Activated T-helper 1 cell treated with anti-CD3 and anti-CD28 coated beads, Interleukin-12 subunit alpha, Interleukin-12 subunit beta, Interleukin-2, Interleukin-4 antibody, amounts not matched to agents 30 ng/mL and 10 ng/mL and 1 ng/mL, durations not matched to agents 14 hours and 24 hours and 36 hours (primary cell): ENCODE measurements at regions of chr11 and their contacts with region 1.

Region 1: DNA sequence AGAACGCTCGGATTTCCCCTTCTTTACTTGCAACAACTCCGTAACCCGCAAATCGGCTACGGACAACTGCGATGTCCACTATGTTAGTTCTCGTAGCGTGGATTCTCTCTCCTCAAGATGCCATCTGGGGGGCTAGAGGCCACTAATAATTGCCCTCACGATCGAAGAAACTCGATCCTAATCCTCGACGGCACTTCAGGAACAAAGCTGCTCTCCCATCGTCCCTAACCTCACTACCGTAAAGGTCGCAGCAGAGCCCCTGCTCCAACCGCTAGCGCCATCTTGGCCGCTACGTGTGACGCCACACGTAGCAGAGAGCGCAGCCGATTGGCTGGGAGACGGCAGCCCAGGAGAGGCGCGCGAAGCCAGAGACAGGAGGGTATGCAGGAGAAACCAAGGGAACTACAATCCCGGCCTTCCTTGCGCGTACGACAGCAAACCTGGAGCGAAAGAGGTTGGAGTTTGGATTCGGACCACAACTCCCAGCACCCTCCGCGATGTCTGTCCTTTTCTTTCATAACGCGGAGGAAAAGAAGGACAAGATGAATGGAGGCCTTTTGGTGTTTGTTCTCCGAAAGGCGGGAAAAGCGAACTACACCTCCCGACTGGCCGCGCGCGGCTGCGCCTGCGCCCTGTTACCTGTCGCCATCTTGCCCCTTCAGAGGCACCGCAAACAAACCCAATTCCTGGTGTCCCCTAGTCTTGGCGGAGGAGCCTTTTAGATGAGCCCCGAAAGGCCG is at the start of gene EMSY:
- DNase-seq: peak; percentile 91
- H3K4me3 Mint-ChIP-seq: peak within 1 kb of the TSS; percentile 98
- H3K27ac Mint-ChIP-seq: peak within 1 kb of the TSS; percentile 96
- H3K4me1 Mint-ChIP-seq: peaks cover 36% of the 10 kb centered on the region
- H3K27me3 Mint-ChIP-seq: no peaks in the 10 kb centered on the region
- total RNA-seq, gene EMSY: 30.4 and 34.8 TPM in 2 replicates

Region 2: DNA sequence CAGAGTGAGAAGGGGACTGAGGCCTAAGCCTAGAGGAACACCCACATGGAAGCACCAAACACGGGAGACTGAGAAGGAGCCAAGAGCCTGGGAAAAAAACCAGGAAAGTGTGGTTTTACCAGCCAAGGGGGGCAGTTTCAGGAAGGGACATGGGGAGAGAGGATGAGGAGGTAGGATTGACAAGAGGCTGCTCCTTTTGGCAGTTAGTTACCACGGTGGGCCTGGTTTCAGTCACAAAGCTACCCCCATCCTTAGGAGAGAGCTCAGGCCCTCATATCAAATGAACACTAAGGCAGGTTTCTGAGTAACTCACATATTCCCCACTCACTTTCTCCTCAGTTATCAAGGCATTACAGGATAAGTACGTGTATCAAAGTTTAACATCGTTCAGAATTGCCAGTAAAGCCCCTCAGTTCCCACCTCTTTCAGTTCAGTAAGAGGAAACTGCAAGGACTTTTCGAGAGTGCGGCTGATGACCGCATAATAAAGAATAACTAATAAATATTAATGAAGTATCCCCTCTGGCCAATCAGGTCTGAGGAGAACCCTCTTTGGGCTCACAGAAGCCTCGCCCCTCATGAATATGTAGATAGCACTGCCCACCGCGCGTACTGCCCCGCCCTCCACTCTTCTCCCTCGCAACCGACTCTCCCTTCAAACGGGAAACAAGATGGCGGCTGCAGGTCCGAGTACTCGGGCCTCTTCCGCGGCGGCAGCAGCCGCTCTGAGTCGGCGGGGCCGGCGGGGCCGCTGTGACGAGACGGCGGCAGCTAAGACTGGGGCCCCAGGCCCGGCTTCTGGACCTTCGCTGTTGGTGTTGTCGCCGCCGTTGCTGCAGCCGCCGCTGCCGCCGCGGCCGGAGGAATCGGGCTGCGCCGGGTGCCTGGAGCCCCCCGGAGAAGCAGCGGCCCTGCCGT is 1696.1 kb before region 1 on chr11 and contains the start of gene RNF169:
- intact Hi-C with region 1: loop called (anchors 2 kb)
- DNase-seq: peak; percentile 85
- H3K4me3 Mint-ChIP-seq: peak within 1 kb of the TSS; percentile 98
- H3K27ac Mint-ChIP-seq: peak within 1 kb of the TSS; percentile 90
- H3K4me1 Mint-ChIP-seq: peaks cover 30% of the 10 kb centered on the region
- H3K27me3 Mint-ChIP-seq: peaks cover 4% of the 10 kb centered on the region
- total RNA-seq, gene RNF169: 14.8 and 15.3 TPM in 2 replicates

Region 3: GRCh38 chr11:75907906-75908527 is 536.5 kb before region 1 on chr11:
- intact Hi-C with region 1: loop called (anchors 10 kb)
- DNase-seq: no peak
- H3K4me3 Mint-ChIP-seq: no peak overlapping the region
- H3K27ac Mint-ChIP-seq: no peak overlapping the region
- H3K4me1 Mint-ChIP-seq: peaks cover 31% of the 10 kb centered on the region
- H3K27me3 Mint-ChIP-seq: peaks cover 16% of the 10 kb centered on the region

Region 4: GRCh38 chr11:76371170-76371569 is 73.4 kb before region 1 on chr11:
- intact Hi-C with region 1: loop called (anchors 2 kb)
- DNase-seq: no peak
- H3K4me3 Mint-ChIP-seq: peak overlapping the region; percentile 52
- H3K27ac Mint-ChIP-seq: peak overlapping the region; percentile 86
- H3K4me1 Mint-ChIP-seq: peaks cover 33% of the 10 kb centered on the region
- H3K27me3 Mint-ChIP-seq: no peaks in the 10 kb centered on the region

Region 5: DNA sequence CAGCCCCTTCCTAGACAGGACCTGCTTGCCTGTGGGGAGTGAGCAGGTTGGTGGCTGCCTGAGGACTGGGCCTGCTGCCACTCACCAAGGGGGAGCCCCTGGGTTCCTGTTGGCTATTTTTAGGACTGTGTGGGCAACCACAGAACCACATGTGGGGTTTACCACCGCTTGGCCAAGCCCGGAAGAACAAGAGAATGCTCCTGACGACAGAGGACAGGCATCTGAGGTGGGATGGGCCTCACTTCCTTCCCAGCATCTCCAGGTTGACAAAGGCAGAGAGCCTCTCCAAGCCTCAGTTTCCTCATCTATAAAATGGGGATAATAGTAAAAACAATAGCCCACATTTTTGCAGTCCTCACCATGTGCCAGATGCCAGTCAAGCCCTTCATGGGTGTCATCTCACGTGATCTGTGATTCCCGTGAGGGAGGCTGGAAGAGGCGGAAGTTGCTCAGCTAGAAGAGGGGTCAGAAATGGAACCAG is 182.4 kb after region 1 on chr11:
- intact Hi-C with region 1: loop called (anchors 2 kb)
- DNase-seq: peak; percentile 72
- H3K4me3 Mint-ChIP-seq: peak overlapping the region; percentile 20
- H3K27ac Mint-ChIP-seq: peak overlapping the region; percentile 92
- H3K4me1 Mint-ChIP-seq: peaks cover 44% of the 10 kb centered on the region
- H3K27me3 Mint-ChIP-seq: peaks cover 8% of the 10 kb centered on the region

Region 6: DNA sequence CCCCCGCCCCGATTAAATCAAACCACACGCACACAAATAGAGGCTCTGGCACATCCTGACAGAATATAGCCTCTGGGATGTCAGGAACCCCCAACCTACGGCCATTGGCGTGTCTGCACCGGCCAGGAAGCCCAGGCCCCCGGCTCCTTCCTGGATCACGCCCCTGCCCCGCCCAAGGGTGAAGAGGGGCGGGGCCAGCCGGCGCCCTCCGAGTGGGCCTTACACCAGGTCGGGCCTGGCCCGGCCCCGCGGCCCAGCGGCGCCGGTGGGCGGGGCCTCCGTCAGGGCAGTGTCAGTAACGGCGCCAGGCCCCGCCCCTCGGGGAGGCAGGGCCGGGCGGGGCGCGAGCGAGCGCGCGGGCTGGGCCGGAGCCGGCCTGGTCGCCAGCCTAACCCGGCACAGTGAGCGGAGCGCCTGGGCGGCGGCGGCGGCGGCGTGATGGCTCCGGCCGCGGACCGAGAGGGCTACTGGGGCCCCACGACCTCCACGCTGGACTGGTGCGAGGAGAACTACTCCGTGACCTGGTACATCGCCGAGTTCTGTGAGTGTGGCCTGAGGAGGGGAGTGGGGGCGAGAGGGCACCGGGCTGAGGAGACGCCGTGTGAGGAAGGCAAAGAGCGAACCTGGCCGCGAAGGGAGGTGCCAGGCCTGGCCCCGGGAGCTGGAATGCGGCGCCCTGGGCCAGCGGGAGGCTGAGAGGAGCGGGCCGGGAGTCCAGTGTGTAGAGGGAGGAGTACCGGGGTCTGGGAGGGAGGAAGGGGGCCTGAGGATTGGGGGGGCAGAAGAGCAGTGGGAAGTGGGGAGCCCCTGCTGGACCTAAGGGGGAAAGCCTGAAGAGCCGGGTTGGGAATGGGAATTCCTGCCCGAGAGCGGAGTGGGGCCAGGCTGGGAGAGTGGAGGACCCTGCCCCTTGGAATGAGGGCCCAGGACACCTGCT is 416.3 kb after region 1 on chr11 and contains the start of gene ACER3:
- intact Hi-C with region 1: loop called (anchors 1 kb)
- DNase-seq: peak; percentile 87
- H3K4me3 Mint-ChIP-seq: peak within 1 kb of the TSS; percentile 90
- H3K27ac Mint-ChIP-seq: peak within 1 kb of the TSS; percentile 73
- H3K4me1 Mint-ChIP-seq: peaks cover 33% of the 10 kb centered on the region
- H3K27me3 Mint-ChIP-seq: peaks cover 2% of the 10 kb centered on the region
- total RNA-seq, gene ACER3: 9.9 and 12.2 TPM in 2 replicates